ENCODE measurements at regions of chr1 and their contacts with region 1.

Region 1: GRCh38 chr1:240888039-240888786 is 276.3 kb upstream of the GREM2 start:
- DNase-seq: peak; percentile 36
- H3K4me3 ChIP-seq: no peak overlapping the region
- H3K27ac ChIP-seq: no peak overlapping the region
- H3K4me1 ChIP-seq: no peaks in the 10 kb centered on the region
- H3K27me3 ChIP-seq: no peaks in the 10 kb centered on the region
- CTCF ChIP-seq: peak; percentile 68 to 72
- POLR2A ChIP-seq: no peak

Region 2: GRCh38 chr1:240946926-240947325 is 58.7 kb after region 1 on chr1:
- CTCF ChIA-PET with region 1: interaction called, 6 read pairs
- POLR2A ChIA-PET with region 1: no interaction called
- dilution Hi-C with region 1: no loop called
- intact Hi-C with region 1: loop called (anchors 1 kb)
- DNase-seq: peak; percentile 52
- H3K4me3 ChIP-seq: no peak overlapping the region
- H3K27ac ChIP-seq: no peak overlapping the region
- H3K4me1 ChIP-seq: peaks cover 11% of the 10 kb centered on the region
- H3K27me3 ChIP-seq: no peaks in the 10 kb centered on the region
- CTCF ChIP-seq: peak; percentile 52 to 54
- POLR2A ChIP-seq: no peak

Region 3: DNA sequence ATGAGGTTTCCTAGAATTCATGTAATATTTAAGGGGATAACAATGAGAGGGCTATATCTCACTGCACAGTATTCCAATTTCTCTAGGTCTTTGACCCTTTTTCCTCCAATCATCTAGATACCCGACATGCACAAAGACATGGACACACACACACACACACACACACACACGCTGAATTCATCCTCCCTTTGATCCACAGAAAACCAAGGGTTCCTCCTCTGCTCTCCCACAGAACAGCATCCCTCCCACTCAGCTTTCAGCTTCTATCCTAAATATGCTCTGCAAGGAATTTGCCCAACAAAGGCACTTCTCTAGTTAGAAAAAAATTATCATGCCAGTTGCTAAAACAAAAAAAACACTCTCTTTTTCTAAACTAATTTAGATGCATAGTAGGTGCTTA is 237.1 kb after region 1 on chr1:
- CTCF ChIA-PET with region 1: no interaction called
- POLR2A ChIA-PET with region 1: no interaction called
- dilution Hi-C with region 1: no loop called
- intact Hi-C with region 1: no loop called
- DNase-seq: no peak
- H3K4me3 ChIP-seq: no peak overlapping the region
- H3K27ac ChIP-seq: no peak overlapping the region
- H3K4me1 ChIP-seq: no peaks in the 10 kb centered on the region
- H3K27me3 ChIP-seq: no peaks in the 10 kb centered on the region
- CTCF ChIP-seq: no peak
- POLR2A ChIP-seq: no peak

Region 4: GRCh38 chr1:241408170-241408569 is 520.0 kb after region 1 on chr1:
- CTCF ChIA-PET with region 1: interaction called, 4 read pairs
- POLR2A ChIA-PET with region 1: no interaction called
- dilution Hi-C with region 1: no loop called
- intact Hi-C with region 1: loop called (anchors 1 kb)
- DNase-seq: peak; percentile 38
- H3K4me3 ChIP-seq: no peak overlapping the region
- H3K27ac ChIP-seq: no peak overlapping the region
- H3K4me1 ChIP-seq: no peaks in the 10 kb centered on the region
- H3K27me3 ChIP-seq: no peaks in the 10 kb centered on the region
- CTCF ChIP-seq: peak in 1 of 2 donors; percentile 5
- POLR2A ChIP-seq: no peak

Region 5: GRCh38 chr1:241499910-241500309 is 611.7 kb after region 1 on chr1:
- CTCF ChIA-PET with region 1: interaction called, 8 read pairs
- POLR2A ChIA-PET with region 1: no interaction called
- dilution Hi-C with region 1: no loop called
- intact Hi-C with region 1: loop called (anchors 1 kb)
- DNase-seq: peak; percentile 59
- H3K4me3 ChIP-seq: no peak overlapping the region
- H3K27ac ChIP-seq: no peak overlapping the region
- H3K4me1 ChIP-seq: no peaks in the 10 kb centered on the region
- H3K27me3 ChIP-seq: no peaks in the 10 kb centered on the region
- CTCF ChIP-seq: peak; percentile 24 to 42
- POLR2A ChIP-seq: no peak

Region 6: GRCh38 chr1:241627453-241628259 is 739.4 kb after region 1 on chr1:
- CTCF ChIA-PET with region 1: interaction called, 3 read pairs
- POLR2A ChIA-PET with region 1: no interaction called
- dilution Hi-C with region 1: no loop called
- intact Hi-C with region 1: loop called (anchors 2 kb)
- DNase-seq: peak; percentile 72
- H3K4me3 ChIP-seq: no peak overlapping the region
- H3K27ac ChIP-seq: no peak overlapping the region
- H3K4me1 ChIP-seq: no peaks in the 10 kb centered on the region
- H3K27me3 ChIP-seq: no peaks in the 10 kb centered on the region
- CTCF ChIP-seq: peak; percentile 39 to 51
- POLR2A ChIP-seq: no peak

Measured in endothelial cell of umbilical vein (primary cell).